ENCODE measurements at regions of chr1 and their contacts with region 1.

Region 1: DNA sequence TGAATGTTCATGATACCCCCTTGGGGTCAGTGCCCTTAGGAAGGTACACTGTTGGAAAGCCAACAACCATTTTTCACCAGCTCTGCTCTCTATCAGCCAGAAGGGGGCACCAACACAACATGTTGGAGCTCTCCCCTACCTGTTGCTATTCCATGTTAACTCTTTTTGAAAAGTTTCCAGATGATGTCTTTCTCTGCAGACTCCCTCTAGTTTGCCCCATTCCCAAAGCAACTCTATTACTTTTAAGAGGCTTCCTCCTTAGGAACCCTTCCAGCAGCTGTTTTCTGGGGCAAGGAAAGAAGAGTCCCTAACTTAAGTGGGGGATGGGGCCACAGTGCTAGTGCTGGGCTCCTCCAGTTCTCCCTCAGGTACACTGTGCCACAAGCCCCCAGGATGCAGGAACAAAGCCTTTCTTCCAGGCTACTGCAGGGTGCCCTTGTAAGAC is 22.9 kb upstream of the NDC1 start:
- DNase-seq: peak; percentile 49 to 59 (median 56)
- H3K4me3 ChIP-seq: no peak overlapping the region
- H3K4me3 Mint-ChIP-seq: no peak overlapping the region
- H3K27ac ChIP-seq: no peak overlapping the region
- H3K27ac Mint-ChIP-seq: peak overlapping the region in 1 of 7 donors; percentile 25
- H3K4me1 ChIP-seq: no peaks in the 10 kb centered on the region
- H3K4me1 Mint-ChIP-seq: peaks cover 0 to 16% (median 4%) of the 10 kb centered on the region in 4 donors
- H3K27me3 ChIP-seq: no peaks in the 10 kb centered on the region
- H3K27me3 Mint-ChIP-seq: no peaks in the 10 kb centered on the region

Region 2: DNA sequence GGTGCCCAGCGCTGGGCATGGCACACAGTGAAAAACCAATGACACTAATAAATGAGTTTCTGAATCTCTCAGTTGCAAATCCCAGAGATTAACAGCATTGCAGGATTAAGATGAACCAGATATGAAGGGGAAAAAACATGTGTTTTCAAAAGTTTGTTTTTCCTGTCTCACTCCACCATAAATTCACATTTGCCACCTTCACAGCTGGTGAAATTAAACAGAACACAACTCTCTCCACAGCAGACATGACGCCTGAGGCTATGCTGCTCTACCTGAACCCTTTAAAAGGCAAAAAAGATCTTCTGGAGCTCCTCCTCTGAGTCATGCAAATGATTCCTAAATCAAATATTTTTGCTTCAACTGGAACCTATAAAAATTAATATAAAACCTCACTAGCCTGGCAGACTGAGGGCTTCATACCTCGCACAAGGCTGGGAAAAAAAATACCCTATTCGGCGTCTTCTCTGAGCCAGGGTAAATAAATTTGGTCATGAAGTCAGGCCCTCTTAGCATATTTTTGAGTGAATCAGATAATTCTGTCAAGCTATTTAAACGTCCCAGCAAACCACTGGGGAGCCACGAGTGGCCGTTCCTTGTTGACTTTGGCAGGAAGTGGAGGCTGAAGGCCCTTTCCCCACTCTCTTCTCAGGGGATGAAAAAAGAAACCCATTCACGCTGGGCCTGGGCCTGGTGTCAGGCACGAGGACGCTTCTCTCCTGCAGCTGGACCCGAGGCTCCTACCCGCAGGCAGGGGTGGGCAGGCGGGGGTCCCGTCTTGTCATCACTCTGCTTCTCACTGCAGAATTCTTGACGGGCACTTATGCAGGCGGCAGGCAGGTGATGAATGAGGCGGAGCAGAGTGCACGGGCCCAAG is 348.8 kb before region 1 on chr1:
- CTCF ChIA-PET with region 1: no interaction called
- POLR2A ChIA-PET with region 1: no interaction called
- intact Hi-C with region 1: no loop called
- DNase-seq: no peak
- H3K4me3 ChIP-seq: no peak overlapping the region
- H3K4me3 Mint-ChIP-seq: no peak overlapping the region
- H3K27ac ChIP-seq: no peak overlapping the region
- H3K27ac Mint-ChIP-seq: no peak overlapping the region
- H3K4me1 ChIP-seq: no peaks in the 10 kb centered on the region
- H3K4me1 Mint-ChIP-seq: no peaks in the 10 kb centered on the region
- H3K27me3 ChIP-seq: no peaks in the 10 kb centered on the region
- H3K27me3 Mint-ChIP-seq: peaks cover 0 to 2% of the 10 kb centered on the region in 2 donors

Region 3: DNA sequence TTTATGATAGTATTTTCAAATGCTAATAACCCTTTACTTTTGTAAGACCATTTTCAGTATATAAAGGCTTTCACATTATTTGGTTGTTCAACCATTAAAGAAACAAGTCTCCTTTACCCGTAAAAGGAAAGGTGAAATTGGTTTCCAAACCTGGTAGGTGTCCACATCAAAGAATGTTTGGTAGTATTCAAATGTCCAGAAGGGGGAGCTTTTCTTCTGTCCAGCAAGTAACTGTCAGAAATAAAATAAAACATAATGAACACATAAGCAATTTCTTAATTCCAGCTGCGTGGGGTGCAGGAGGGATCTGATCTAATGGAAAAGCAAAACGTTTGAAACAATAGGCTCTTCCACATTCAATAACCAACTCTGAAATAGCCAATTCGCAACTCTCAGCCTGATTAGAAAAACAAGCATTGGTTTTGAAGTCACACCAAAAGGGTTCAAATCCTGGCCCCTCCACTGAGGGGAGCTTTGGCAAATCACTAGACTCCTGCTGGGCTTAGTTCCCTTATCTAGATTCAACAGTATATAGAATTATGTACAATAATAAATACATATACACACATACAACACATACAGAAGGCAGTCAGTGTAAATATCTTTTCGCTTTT is 17.6 kb after region 1 on chr1:
- CTCF ChIA-PET with region 1: interaction called, 14 read pairs
- POLR2A ChIA-PET with region 1: no interaction called
- intact Hi-C with region 1: no loop called
- DNase-seq: peak in 4 of 5 donors; percentile 14 to 26 (median 23)
- H3K4me3 ChIP-seq: no peak overlapping the region
- H3K4me3 Mint-ChIP-seq: no peak overlapping the region
- H3K27ac ChIP-seq: no peak overlapping the region
- H3K27ac Mint-ChIP-seq: no peak overlapping the region
- H3K4me1 ChIP-seq: no peaks in the 10 kb centered on the region
- H3K4me1 Mint-ChIP-seq: peaks cover 2 to 8% (median 3%) of the 10 kb centered on the region in 4 donors
- H3K27me3 ChIP-seq: no peaks in the 10 kb centered on the region
- H3K27me3 Mint-ChIP-seq: no peaks in the 10 kb centered on the region

Region 4: DNA sequence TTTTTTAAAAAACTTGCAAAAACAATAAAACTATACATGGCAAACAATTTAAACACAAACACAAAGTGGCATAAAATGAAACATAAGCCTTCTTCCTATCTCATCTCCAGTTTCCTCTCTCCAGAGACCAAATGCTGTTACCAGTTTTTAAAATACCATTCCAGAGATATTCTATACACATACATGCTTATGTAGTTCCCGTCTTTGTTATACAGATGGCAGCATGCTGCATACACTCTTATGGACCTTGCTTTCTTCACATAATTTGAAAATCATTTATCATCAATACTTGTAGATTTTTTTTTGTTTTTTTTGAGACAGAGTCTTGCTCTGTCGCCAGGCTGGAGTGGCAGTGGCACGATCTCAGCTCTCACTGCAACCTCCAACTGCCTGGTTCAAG is 92.1 kb after region 1 on chr1:
- CTCF ChIA-PET with region 1: interaction called, 160 read pairs
- POLR2A ChIA-PET with region 1: interaction called, 20 read pairs
- intact Hi-C with region 1: loop called (anchors 1 kb)
- DNase-seq: no peak
- H3K4me3 ChIP-seq: no peak overlapping the region
- H3K4me3 Mint-ChIP-seq: no peak overlapping the region
- H3K27ac ChIP-seq: no peak overlapping the region
- H3K27ac Mint-ChIP-seq: no peak overlapping the region
- H3K4me1 ChIP-seq: peaks cover 3% of the 10 kb centered on the region
- H3K4me1 Mint-ChIP-seq: peaks cover 8 to 15% (median 10%) of the 10 kb centered on the region in 4 donors
- H3K27me3 ChIP-seq: no peaks in the 10 kb centered on the region
- H3K27me3 Mint-ChIP-seq: no peaks in the 10 kb centered on the region

Region 5: DNA sequence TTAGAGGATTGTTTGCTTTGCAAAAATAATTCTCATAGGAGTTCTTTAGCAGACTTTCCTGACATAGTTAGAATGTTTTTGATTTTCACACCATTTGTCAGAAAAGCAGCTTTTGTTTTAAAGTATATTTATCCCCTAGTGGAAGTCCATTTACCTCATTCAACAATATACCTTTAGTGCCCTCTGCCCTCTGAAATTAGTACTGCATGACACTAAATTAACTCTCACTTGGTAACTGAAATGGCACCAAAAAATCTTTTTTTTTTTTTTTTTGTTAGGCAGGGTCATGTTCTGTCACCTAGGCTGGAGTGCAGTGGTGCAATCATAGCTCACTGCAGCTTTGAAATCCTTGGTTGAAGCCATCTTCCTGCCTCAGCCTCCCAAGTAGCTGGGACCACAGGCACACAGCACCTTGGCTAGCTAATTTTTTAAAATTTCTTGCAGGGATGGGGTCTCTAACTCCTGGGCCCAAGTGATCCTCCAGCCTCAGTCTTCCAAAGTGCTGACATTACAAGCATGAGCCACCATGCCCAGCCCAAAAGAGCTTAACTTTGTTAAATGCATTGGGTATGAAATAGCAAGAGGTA is 98.8 kb after region 1 on chr1:
- CTCF ChIA-PET with region 1: interaction called, 160 read pairs
- POLR2A ChIA-PET with region 1: interaction called, 20 read pairs
- intact Hi-C with region 1: loop called (anchors 1 kb)
- DNase-seq: peak; percentile 41 to 61 (median 55)
- H3K4me3 ChIP-seq: no peak overlapping the region
- H3K4me3 Mint-ChIP-seq: no peak overlapping the region
- H3K27ac ChIP-seq: no peak overlapping the region
- H3K27ac Mint-ChIP-seq: no peak overlapping the region
- H3K4me1 ChIP-seq: no peaks in the 10 kb centered on the region
- H3K4me1 Mint-ChIP-seq: peaks cover 0 to 6% (median 2%) of the 10 kb centered on the region in 4 donors
- H3K27me3 ChIP-seq: no peaks in the 10 kb centered on the region
- H3K27me3 Mint-ChIP-seq: no peaks in the 10 kb centered on the region